ENCODE measurements at regions of chr6 and their contacts with region 1.

Region 1: GRCh38 chr6:53284901-53285300 is 63.8 kb downstream of the ELOVL5 start:
- DNase-seq: no peak
- H3K4me3 ChIP-seq: no peak overlapping the region
- H3K27ac ChIP-seq: peak overlapping the region in 2 of 59 donors; percentile 5 to 27
- H3K27me3 ChIP-seq: no peaks in the 10 kb centered on the region
- CTCF ChIP-seq: no peak

Region 2: DNA sequence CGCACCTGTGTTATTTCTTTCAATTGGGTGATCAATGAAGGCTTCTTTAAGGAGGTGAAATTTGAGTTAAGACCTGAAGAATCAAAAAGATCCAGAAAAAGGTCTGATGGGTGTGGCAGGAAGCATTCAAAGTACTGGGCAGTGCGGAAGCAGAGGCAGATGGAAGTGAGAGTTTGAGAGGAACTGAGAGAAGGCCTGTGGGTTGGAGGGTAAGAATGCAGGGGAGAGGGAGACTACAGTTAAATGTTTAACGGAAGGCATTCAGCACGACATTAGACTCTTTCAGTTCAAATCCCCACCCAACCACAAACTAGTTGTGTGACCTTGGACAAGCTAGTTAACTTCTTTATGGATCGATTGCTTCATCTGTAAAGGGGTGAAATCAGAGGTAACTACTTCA is 85.7 kb before region 1 on chr6:
- intact Hi-C with region 1: no loop called
- DNase-seq: no peak
- H3K4me3 ChIP-seq: no peak overlapping the region
- H3K27ac ChIP-seq: no peak overlapping the region
- H3K27me3 ChIP-seq: no peaks in the 10 kb centered on the region
- CTCF ChIP-seq: no peak

Region 3: DNA sequence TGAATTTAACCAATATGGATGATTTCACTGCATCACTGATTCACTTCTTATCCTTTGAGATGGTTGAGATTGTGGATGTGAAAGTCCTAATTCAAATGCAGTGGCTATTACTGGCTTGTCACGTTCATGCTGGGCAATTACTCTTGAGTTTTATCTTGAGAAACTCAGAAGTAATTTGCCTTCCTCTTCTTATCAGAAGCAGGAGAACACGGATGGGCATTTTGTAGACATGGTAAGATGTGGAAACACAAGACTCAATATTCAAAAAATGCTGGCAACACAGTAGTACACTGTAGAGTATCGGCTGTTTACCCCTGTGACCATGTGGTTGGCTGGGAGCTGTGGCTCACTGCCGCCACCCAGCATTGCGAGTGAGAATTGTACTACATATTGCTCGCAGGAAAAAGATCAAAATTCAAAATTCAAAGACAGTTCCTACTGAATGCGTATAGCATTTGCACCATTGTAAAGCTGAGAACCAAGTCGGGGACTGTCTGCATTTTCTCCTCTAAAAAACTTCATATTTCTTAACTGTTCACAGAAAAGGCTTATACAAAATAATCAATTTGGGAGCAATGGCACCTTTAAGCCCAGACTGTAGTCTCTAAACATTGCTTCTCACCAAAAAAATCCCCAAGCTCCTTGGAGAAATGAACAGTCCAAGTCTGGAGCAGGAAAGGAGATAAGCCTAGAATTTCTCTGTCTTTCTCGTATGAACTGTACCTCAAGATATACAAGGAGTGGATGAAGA is 125.8 kb after region 1 on chr6:
- intact Hi-C with region 1: loop called in 1 of 2 experiments (anchors 10 kb)
- DNase-seq: peak in 4 of 10 donors; percentile 10 to 51 (median 35)
- H3K4me3 ChIP-seq: peak overlapping the region in 3 of 59 donors; percentile 1 to 21 (median 19)
- H3K27ac ChIP-seq: peak overlapping the region in 1 of 59 donors; percentile 0
- H3K27me3 ChIP-seq: peaks cover 0 to 7% (median 0%) of the 10 kb centered on the region in 45 donors
- CTCF ChIP-seq: peak; percentile 18 to 85 (median 64)

Region 4: DNA sequence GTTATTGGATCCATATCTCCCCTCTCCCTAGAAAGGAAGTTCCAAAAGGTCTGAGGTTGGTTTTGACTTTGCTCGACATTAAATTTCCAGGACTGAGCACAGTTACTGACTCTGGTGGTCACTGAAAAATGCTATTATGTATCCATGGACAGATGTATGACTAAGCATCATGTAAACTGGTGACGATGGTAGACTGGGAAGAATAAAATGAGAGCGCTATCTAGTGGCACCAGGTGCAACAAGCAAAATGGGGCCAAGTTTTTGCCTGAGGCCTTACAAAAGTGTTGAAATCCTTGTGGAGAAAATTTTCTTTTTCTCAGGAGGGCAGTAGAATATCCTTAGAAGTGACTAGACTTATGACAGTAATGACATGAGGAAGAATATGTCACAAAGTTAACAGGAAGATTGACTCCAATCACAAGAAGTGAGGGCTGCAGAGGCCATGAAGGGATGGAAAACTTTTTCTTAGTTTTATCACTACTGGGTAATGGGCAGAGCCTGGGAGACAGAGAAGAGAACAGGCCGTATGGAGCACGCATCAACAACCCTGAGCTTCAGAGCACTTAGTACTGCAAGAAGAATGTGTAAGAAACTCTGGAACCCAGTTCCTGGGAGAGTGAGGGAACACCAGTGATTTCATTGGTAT is 152.8 kb after region 1 on chr6:
- intact Hi-C with region 1: loop called in 1 of 2 experiments (anchors 5 kb)
- DNase-seq: peak in 2 of 10 donors; percentile 36 to 38
- H3K4me3 ChIP-seq: no peak overlapping the region
- H3K27ac ChIP-seq: peak overlapping the region in 57 of 59 donors; percentile 20 to 97 (median 88)
- H3K27me3 ChIP-seq: peaks cover 0 to 2% (median 0%) of the 10 kb centered on the region in 45 donors
- CTCF ChIP-seq: peak in 55 of 56 donors; percentile 35 to 84 (median 67)